ENCODE measurements at regions of chr9 and their contacts with region 1.

Region 1: DNA sequence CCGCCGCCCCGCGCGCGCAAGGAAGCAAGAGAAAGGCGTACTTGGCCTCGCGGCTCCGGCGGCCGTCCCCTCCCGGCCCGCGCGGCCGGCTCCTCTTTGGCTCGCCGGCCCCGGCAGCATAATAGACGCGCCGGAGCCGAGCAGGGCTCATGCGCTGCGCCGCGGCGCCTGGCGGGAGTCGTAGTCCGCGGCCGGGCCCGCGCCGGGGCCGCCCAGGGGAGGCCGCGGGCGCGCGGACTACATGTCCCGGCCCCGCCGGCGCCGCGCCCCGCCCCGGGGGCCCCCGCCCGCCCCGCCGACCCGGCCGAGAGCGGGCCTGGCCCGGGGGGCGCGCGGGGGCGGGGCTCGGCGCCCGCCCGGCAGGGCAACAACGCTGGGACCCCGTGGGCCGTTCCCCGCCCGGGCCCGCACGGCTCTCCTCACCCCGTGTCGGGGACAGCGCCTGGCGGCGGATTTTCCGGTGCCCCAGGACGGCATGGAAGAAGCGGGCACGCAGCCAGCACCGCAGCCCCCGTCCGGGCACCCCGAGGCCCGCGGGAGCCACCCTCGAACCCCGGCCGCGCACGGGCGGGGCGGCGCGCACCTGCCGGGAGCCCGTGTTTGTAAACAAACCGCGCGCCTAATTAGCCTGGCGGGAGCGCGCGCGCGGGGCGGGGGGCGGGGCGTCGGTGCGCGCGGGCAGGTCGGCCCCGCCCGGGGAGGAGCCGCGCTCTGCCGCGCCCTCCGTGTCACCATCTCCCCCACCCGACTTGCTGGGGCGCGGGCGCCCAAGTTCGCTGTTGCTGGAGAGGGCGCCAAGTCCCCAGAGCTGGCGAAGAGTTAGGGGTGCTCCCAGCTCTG is at the start of gene BRD3:
- DNase-seq: peak; percentile 91
- ATAC-seq: peak; percentile 85
- H3K4me3 Mint-ChIP-seq: peak within 1 kb of the TSS; percentile 85
- H3K27ac Mint-ChIP-seq: peak within 1 kb of the TSS; percentile 84
- H3K4me1 Mint-ChIP-seq: peaks cover 28% of the 10 kb centered on the region
- H3K27me3 Mint-ChIP-seq: peaks cover 14% of the 10 kb centered on the region
- total RNA-seq, gene BRD3: 33.8 to 39.2 TPM

Region 2: DNA sequence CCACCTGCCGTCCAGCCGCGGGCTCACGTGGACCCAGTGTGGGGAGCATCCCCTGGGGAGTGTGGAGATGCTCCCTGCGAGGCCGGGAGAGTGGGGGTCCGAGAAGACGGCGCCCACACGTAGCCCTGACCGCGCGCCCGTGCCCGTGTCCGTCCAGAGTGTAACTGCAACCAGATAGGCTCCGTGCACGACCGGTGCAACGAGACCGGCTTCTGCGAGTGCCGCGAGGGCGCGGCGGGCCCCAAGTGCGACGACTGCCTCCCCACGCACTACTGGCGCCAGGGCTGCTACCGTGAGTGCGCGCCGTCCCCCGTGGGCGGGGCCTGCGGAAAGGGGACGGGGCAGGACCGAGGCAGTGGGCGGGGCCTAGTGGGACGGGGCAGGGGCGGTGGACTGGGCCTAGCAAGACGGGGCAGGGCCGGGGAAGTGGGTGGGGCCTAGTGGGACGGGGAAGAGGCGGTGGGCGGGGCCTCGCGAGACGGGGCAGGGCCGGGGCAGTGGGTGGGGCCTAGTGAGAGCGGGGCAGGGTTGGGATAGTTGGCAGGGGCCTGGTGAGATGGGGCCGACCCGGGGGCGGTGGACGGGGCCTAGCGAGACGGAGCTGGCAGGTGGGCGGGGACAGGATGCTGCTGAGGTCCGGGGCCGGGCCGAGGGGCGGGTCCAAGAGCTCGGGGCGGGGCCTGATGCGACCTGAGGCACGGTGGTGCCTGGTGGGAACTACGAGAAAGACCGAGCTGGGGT is 1827.2 kb before region 1 on chr9:
- CTCF ChIA-PET with region 1: no interaction called
- POLR2A ChIA-PET with region 1: no interaction called
- intact Hi-C with region 1: loop called in 1 of 2 experiments (anchors 5 kb)
- DNase-seq: peak; percentile 100
- ATAC-seq: peak; percentile 95
- H3K4me3 Mint-ChIP-seq: peak overlapping the region; percentile 87
- H3K27ac Mint-ChIP-seq: peak overlapping the region; percentile 91
- H3K4me1 Mint-ChIP-seq: peaks cover 10% of the 10 kb centered on the region
- H3K27me3 Mint-ChIP-seq: peaks cover 2% of the 10 kb centered on the region

Region 3: GRCh38 chr9:133347985-133348717 is 720.0 kb before region 1 on chr9 and contains the starts of genes MED22 and RPL7A:
- CTCF ChIA-PET with region 1: no interaction called
- POLR2A ChIA-PET with region 1: no interaction called
- intact Hi-C with region 1: loop called (anchors 5 to 10 kb)
- DNase-seq: peak; percentile 96
- ATAC-seq: peak; percentile 83
- H3K4me3 Mint-ChIP-seq: peak within 1 kb of the TSS; percentile 97
- H3K27ac Mint-ChIP-seq: peak within 1 kb of the TSS; percentile 97
- H3K4me1 Mint-ChIP-seq: peaks cover 36% of the 10 kb centered on the region
- H3K27me3 Mint-ChIP-seq: no peaks in the 10 kb centered on the region
- total RNA-seq, gene MED22: 22.9 to 26.4 TPM
- total RNA-seq, gene RPL7A: 3,179 to 3,246 TPM

Region 4: GRCh38 chr9:133701862-133702797 is 366.0 kb before region 1 on chr9:
- CTCF ChIA-PET with region 1: no interaction called
- POLR2A ChIA-PET with region 1: no interaction called
- intact Hi-C with region 1: loop called in 1 of 2 experiments (anchors 2 kb)
- DNase-seq: peak; percentile 88
- ATAC-seq: peak; percentile 87
- H3K4me3 Mint-ChIP-seq: peak overlapping the region; percentile 81
- H3K27ac Mint-ChIP-seq: peak overlapping the region; percentile 97
- H3K4me1 Mint-ChIP-seq: peaks cover 53% of the 10 kb centered on the region
- H3K27me3 Mint-ChIP-seq: no peaks in the 10 kb centered on the region

Region 5: DNA sequence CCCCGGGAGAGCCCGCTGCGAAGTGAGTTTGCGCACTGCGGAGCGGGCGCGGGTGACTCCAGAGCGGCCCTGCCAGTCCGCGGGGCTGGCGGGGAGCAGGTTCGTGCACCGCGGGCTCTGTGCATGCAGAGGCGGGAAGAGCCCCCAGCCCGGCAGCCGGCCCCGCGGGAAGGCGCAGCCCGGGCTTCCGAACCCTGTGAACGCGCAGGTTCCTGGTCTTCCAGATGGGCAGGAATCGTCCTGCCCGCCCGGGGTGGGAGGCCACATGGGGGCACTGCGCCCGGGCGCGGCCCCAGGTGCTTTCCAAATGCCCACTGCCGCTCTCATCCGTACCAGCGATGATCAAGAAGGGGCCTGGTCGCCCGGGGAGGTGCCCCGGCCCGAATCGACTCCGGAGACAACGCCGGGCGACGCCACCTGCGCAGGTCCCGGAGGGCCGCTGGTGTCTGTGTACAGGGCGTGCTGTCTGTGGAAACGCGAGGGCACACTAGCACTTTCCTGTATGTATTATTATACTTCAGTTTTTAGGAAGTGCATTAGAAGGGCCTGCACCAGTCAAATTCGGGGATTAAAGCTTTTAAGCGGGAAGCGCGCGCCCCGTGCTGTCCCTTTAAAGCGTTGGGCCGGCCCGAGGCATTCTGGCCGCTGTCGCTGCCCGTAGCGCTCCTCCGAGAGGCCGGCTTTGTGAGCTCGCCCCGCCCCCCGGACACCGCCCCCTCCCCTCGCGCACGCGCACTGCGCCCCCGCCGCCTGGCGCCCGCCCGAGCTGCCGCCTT is 67.4 kb after region 1 on chr9 and contains the start of gene WDR5:
- CTCF ChIA-PET with region 1: no interaction called
- POLR2A ChIA-PET with region 1: interaction called, 12 read pairs
- intact Hi-C with region 1: loop called (anchors 1 kb)
- DNase-seq: peak; percentile 95
- ATAC-seq: peak; percentile 78
- H3K4me3 Mint-ChIP-seq: peak within 1 kb of the TSS; percentile 98
- H3K27ac Mint-ChIP-seq: peak within 1 kb of the TSS; percentile 90
- H3K4me1 Mint-ChIP-seq: peaks cover 31% of the 10 kb centered on the region
- H3K27me3 Mint-ChIP-seq: no peaks in the 10 kb centered on the region
- total RNA-seq, gene WDR5: 51.4 to 59.2 TPM

Region 6: GRCh38 chr9:134443168-134444037 is 375.3 kb after region 1 on chr9:
- CTCF ChIA-PET with region 1: no interaction called
- POLR2A ChIA-PET with region 1: no interaction called
- intact Hi-C with region 1: loop called in 1 of 2 experiments (anchors 5 kb)
- DNase-seq: peak; percentile 94
- ATAC-seq: peak; percentile 100
- H3K4me3 Mint-ChIP-seq: no peak overlapping the region
- H3K27ac Mint-ChIP-seq: no peak overlapping the region
- H3K4me1 Mint-ChIP-seq: peaks cover 21% of the 10 kb centered on the region
- H3K27me3 Mint-ChIP-seq: peaks cover 9% of the 10 kb centered on the region

Measured in activated CD4-positive, alpha-beta T cell treated with anti-CD3 and anti-CD28 coated beads for 36 hours (primary cell).